Posterior cingulate gyrus (tissue), 11 donors: ENCODE measurements at regions of chr11 and their contacts with region 1.

Region 1: GRCh38 chr11:36376888-36377758 is 81.0 kb downstream of the PRR5L start:
- DNase-seq: peak in 7 of 10 donors; percentile 15 to 93 (median 46)

Region 2: GRCh38 chr11:36300651-36301050 is 76.5 kb before region 1 on chr11:
- intact Hi-C with region 1: loop called (anchors 5 kb)
- DNase-seq: peak; percentile 21 to 95 (median 62)